K562 (cell line): ENCODE measurements at regions of chr3 and their contacts with region 1.

Region 1: GRCh38 chr3:36868614-36869436 is 76.0 kb downstream of the TRANK1 start:
- DNase-seq: peak; percentile 66 to 85 (median 74)
- ATAC-seq: peak; percentile 97
- H3K4me3 ChIP-seq: no peak overlapping the region
- H3K27ac ChIP-seq: no peak overlapping the region
- H3K4me1 ChIP-seq: no peaks in the 10 kb centered on the region
- H3K27me3 ChIP-seq: no peaks in the 10 kb centered on the region; a peak in 2 of 5 replicates
- CTCF ChIP-seq: peak; percentile 79 to 89 (median 88)
- EP300 ChIP-seq: no peak
- POLR2A ChIP-seq: no peak
- RAD21 ChIP-seq: peak; percentile 83 to 85

Region 2: DNA sequence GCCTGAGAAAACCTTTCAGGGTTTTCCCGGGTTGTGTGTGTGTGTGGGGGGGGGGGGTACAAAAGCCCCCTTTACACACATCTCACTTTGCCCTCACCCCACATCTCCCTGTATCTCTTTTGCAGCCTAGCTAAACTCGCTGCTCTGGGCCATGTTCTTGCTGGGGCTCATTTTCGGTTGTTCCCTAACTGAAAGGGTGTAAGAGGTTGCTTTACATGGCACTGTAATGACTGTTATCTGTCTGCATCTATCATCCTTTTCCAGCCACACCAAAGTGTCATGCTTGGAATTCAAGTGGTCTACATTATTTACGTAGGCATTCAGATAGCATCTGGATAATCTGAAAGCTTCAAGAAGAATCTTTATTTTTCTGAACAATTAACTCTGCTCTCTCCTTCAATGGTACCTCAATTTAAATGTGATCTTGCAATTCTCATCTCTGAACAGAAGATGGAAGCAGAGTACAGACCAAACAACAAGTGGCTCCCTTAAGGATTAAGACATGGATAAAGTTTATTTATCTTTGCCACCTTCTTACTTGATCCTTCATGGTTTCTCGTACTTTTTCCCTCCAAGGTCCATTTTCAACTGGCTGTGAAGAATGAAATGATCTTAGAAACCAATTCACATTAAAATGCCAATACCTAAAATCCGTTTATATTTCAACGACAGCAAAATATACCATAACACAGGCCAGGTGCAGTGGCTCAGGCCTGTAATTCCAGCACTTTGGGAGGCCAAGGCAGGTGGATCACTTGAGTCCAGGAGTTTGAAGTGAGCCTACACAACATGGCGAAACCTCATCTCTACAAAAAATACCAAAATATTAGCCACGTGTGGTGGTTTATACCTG is 139.4 kb before region 1 on chr3:
- CTCF ChIA-PET with region 1: interaction called, 18 read pairs
- POLR2A ChIA-PET with region 1: interaction called, 5 read pairs
- in situ Hi-C with region 1: loop called (anchors 25 kb)
- intact Hi-C with region 1: loop called (anchors 1 kb)
- DNase-seq: peak; percentile 43 to 58 (median 52)
- ATAC-seq: peak; percentile 86
- H3K4me3 ChIP-seq: no peak overlapping the region
- H3K27ac ChIP-seq: no peak overlapping the region
- H3K4me1 ChIP-seq: peaks cover 0 to 6% of the 10 kb centered on the region in 2 experiments; a peak in 2 of 5 replicates
- H3K27me3 ChIP-seq: peaks cover 0 to 16% of the 10 kb centered on the region in 2 experiments; a peak in 4 of 5 replicates
- CTCF ChIP-seq: peak; percentile 51 to 94 (median 79); a peak in 5 of 6 replicates
- EP300 ChIP-seq: no peak
- POLR2A ChIP-seq: no peak
- RAD21 ChIP-seq: peak; percentile 97

Region 3: DNA sequence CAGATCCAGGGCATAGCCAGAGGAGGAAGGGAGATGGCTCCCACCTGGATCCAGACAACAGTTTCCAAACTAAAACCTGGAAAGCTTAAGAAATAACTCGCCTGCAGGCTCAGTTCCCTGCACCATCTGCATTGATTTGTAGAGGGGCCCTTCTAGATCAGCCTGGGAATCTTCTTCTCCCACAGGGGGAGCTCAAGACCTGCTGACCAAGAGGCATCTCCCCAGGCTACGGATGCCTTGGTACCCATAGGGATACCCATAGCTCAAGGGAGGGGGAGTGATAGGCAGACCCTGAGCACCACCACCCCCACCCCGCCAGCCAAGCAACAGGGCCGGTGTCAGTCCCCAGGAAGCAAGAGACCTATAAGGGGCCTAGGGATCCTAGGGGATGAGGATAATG is 76.5 kb before region 1 on chr3:
- CTCF ChIA-PET with region 1: interaction called, 4 read pairs
- POLR2A ChIA-PET with region 1: no interaction called
- in situ Hi-C with region 1: no loop called
- intact Hi-C with region 1: loop called (anchors 1 kb)
- DNase-seq: peak; percentile 57 to 66 (median 62)
- ATAC-seq: peak; percentile 96
- H3K4me3 ChIP-seq: no peak overlapping the region
- H3K27ac ChIP-seq: no peak overlapping the region
- H3K4me1 ChIP-seq: no peaks in the 10 kb centered on the region
- H3K27me3 ChIP-seq: peaks cover 0 to 2% of the 10 kb centered on the region in 2 experiments; a peak in 1 of 5 replicates
- CTCF ChIP-seq: peak; percentile 74 to 87 (median 74)
- EP300 ChIP-seq: no peak
- POLR2A ChIP-seq: no peak
- RAD21 ChIP-seq: peak; percentile 81 to 85

Region 4: GRCh38 chr3:36852071-36852470 is 16.8 kb before region 1 on chr3:
- CTCF ChIA-PET with region 1: no interaction called
- POLR2A ChIA-PET with region 1: interaction called, 13 read pairs
- in situ Hi-C with region 1: no loop called
- intact Hi-C with region 1: no loop called
- DNase-seq: no peak
- ATAC-seq: no peak
- H3K4me3 ChIP-seq: no peak overlapping the region
- H3K27ac ChIP-seq: no peak overlapping the region
- H3K4me1 ChIP-seq: no peaks in the 10 kb centered on the region
- H3K27me3 ChIP-seq: peaks cover 15 to 29% of the 10 kb centered on the region in 2 experiments
- CTCF ChIP-seq: no peak
- EP300 ChIP-seq: no peak
- POLR2A ChIP-seq: no peak
- RAD21 ChIP-seq: no peak

Region 5: DNA sequence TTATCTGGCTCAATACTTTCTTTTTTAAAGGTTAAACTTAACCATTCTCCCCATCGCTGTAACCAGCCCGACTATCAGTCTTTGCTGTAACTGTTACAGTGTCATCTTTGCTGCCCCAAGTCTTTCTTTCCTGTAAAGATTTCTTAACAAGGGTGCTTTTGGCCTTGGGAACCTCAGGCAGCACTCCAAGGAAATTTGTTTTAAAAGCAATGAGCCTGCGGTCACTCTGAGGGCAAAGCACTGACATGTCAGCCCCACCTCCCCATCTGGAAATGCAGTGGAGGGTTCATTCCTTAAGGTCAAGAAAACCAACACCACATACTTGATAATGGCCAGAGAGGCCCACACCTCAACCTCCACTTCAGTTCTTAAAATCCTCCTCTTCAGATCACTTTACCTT is 72.8 kb after region 1 on chr3:
- CTCF ChIA-PET with region 1: no interaction called
- POLR2A ChIA-PET with region 1: no interaction called
- in situ Hi-C with region 1: no loop called
- intact Hi-C with region 1: no loop called
- DNase-seq: peak; percentile 36 to 83 (median 56)
- ATAC-seq: peak; percentile 84
- H3K4me3 ChIP-seq: no peak overlapping the region
- H3K27ac ChIP-seq: peak overlapping the region; percentile 53
- H3K4me1 ChIP-seq: peaks cover 22 to 26% of the 10 kb centered on the region in 2 experiments
- H3K27me3 ChIP-seq: no peaks in the 10 kb centered on the region
- CTCF ChIP-seq: no peak
- EP300 ChIP-seq: no peak
- POLR2A ChIP-seq: no peak
- RAD21 ChIP-seq: no peak